H1 (cell line): ENCODE measurements at regions of chr3 and their contacts with region 1.

Region 1: DNA sequence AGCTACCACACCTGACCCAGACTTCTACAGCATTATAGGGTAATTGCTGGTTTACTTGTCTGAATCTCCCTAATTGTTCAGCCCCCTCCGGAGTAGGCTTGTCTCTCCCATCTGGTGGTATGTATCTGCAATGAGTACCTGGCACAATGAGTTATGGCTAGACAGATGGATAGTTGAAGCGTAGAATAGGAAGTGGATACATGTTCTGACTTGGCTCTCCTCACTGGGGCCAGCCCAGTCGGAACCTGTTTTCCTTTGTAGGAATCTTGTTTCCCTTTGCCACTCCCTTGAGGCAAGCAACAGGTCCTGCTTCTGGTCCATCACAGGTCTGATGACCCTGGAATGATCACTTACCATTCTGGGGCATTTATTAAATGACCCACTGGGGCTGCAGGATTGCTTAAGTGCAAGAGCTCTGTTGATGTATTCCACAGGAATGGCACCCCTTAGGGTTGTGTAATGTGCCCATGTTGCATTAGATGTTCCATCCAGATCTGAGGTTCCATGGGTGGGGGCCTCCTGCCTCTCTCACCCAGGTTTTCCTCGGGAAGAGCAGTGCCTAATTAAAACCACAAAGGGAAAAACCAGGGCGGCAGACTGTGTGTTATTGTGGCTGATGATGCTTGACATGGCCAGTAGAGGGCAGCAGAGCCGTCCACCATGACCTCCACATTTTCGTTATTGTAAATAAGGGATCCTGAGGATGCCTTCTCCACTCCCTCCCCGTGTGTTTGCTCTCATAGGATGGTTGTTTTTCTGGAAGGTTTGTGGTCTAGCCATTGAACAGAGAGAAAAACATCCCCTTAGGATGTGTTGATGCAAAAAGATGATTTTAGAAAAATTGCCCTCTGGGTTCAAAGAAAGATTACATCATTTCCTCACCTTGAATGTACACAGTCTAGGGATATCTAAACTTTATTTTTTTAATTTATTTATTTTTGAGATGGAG is 58.0 kb downstream of the CMTM8 start:
- DNase-seq: peak; percentile 44 to 73
- H3K4me3 ChIP-seq: no peak overlapping the region
- H3K27ac ChIP-seq: no peak overlapping the region
- H3K4me1 ChIP-seq: peaks cover 0 to 3% (median 0%) of the 10 kb centered on the region in 4 experiments; a peak in 2 of 7 replicates
- H3K27me3 ChIP-seq: no peaks in the 10 kb centered on the region
- CTCF ChIP-seq: peak; percentile 87 to 95 (median 88)
- EP300 ChIP-seq: no peak
- POLR2A ChIP-seq: no peak
- RAD21 ChIP-seq: peak; percentile 87 to 89

Region 2: DNA sequence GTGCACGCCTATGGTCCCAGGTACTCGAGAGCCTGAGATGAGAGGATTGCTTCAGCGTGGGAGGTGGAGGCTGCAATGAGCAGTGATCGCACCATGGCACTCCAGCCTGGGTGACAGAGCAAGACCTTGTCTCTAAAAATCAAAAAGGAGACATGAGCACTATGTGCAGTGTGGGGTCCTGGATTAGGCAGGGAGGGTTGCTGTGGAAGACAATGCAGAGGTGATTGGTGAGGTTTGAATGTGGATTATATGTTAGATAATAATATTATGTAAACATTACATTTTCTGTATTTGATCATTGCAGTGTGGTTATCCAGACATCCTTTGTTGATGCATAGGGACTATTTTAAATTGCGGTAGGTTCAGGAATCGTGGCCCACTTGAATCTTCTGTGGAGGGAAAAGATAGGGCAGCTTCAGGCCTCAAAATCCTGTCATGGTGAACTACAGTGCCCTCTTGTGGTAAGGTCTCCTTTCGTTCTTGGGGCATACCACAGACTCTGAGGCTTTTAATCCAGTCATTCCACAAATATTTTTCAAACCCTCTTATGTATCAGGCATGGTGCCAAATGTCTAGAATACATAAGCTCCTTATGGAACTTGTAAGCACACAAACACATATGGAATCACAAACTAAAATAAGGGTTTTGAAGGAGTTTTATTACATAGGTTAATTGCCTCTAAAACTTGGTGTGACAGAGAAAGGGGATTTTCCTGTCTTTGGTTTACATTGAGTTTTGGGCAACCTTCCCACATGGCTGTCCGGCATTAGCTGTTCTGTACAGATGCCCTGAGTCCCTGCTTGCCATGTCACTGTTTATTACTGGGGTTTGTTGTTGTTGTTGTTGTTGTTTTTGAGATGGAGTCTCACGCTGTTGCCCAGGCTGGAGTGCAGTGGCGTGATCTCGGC is 152.4 kb before region 1 on chr3:
- CTCF ChIA-PET with region 1: no interaction called
- POLR2A ChIA-PET with region 1: no interaction called
- DNase-seq: no peak
- H3K4me3 ChIP-seq: no peak overlapping the region
- H3K27ac ChIP-seq: no peak overlapping the region
- H3K4me1 ChIP-seq: peaks cover 0 to 6% (median 4%) of the 10 kb centered on the region in 4 experiments; a peak in 4 of 7 replicates
- H3K27me3 ChIP-seq: no peaks in the 10 kb centered on the region
- CTCF ChIP-seq: peak; percentile 26 to 81 (median 77)
- EP300 ChIP-seq: no peak
- POLR2A ChIP-seq: no peak
- RAD21 ChIP-seq: peak; percentile 89 to 91

Region 3: DNA sequence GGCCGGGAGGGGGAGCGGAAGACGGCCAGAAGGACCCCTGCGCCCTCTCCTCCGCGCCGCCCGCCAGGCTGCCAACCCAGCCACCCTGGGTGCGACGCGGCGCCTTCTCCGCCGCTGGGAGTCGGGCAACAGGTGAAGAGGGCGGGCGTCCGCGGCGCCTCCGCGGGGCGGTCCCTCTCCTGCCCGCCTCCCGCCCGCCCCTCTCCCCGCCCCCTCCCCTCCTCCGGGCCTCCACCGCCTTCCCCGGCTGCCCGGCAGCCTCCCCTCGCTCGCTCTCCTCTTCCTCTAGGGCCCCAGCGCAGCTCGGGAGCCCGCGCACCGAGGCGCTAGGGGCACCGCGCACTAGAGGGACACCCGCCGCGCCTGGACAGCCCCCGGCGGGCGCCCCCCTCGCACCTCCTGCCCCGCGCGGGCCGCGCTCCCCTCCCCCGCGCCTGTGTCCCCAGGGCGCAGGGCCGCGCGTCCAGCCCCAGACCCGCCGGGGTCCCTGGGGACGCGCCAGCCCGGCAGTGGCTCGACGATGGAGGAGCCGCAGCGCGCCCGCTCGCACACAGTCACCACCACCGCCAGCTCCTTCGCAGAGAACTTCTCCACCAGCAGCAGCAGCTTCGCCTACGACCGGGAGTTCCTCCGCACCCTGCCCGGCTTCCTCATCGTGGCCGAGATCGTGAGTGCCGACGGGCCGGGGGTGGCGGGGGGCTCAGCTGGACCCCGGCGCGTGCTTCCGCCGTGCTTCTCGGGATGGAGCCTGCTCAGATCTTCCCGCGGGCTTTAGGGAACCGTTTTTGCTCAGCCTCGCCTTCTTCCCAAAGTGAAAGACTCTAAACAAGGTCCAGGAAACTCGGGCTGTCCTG is 57.9 kb before region 1 on chr3 and contains the start of gene CMTM8:
- CTCF ChIA-PET with region 1: interaction called, 16 read pairs
- POLR2A ChIA-PET with region 1: no interaction called
- DNase-seq: peak in 1 of 2 experiments; percentile 77
- H3K4me3 ChIP-seq: peak within 1 kb of the TSS; percentile 54 to 72 (median 64)
- H3K27ac ChIP-seq: no peak within 1 kb of the TSS
- H3K4me1 ChIP-seq: peaks cover 0 to 8% (median 4%) of the 10 kb centered on the region in 4 experiments; a peak in 5 of 7 replicates
- H3K27me3 ChIP-seq: peaks cover 2 to 31% (median 19%) of the 10 kb centered on the region in 4 experiments
- CTCF ChIP-seq: no peak
- EP300 ChIP-seq: no peak
- POLR2A ChIP-seq: no peak
- RAD21 ChIP-seq: no peak
- total RNA-seq, gene CMTM8: 10.5 and 11.7 TPM in 2 replicates

Region 4: DNA sequence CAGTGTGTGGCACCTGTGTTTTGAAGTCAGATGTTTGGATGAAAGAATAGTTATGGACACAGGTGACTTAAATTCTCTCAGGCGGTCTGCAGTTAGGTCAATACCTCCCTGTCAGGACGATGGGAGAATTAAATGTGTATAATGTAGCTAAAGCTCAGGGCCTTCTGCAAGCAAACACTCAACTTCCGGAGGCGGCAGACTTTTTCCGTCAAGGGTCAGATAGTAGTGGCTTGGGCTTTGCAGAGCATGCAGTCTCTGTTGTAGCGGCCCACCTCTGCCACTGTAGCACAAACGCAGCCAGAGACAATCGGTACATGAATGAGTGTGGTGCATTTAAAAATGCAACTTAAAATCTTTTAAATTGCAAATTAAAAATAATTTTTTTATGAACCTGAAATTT is 10.6 kb before region 1 on chr3:
- CTCF ChIA-PET with region 1: interaction called, 43 read pairs
- POLR2A ChIA-PET with region 1: no interaction called
- DNase-seq: no peak
- H3K4me3 ChIP-seq: no peak overlapping the region
- H3K27ac ChIP-seq: no peak overlapping the region
- H3K4me1 ChIP-seq: 0 out of 7 replicates have a peak, but pooled peaks cover 0 to 2% (median 0%) of the 10 kb centered on the region in 4 experiments
- H3K27me3 ChIP-seq: no peaks in the 10 kb centered on the region
- CTCF ChIP-seq: no peak
- EP300 ChIP-seq: no peak
- POLR2A ChIP-seq: no peak
- RAD21 ChIP-seq: no peak

Region 5: GRCh38 chr3:32313723-32314473 is 17.4 kb after region 1 on chr3:
- CTCF ChIA-PET with region 1: interaction called, 13 read pairs
- POLR2A ChIA-PET with region 1: no interaction called
- DNase-seq: no peak
- H3K4me3 ChIP-seq: no peak overlapping the region
- H3K27ac ChIP-seq: no peak overlapping the region
- H3K4me1 ChIP-seq: peaks cover 0 to 14% (median 4%) of the 10 kb centered on the region in 4 experiments; a peak in 6 of 7 replicates
- H3K27me3 ChIP-seq: no peaks in the 10 kb centered on the region
- CTCF ChIP-seq: no peak
- EP300 ChIP-seq: no peak
- POLR2A ChIP-seq: no peak
- RAD21 ChIP-seq: no peak

Region 6: DNA sequence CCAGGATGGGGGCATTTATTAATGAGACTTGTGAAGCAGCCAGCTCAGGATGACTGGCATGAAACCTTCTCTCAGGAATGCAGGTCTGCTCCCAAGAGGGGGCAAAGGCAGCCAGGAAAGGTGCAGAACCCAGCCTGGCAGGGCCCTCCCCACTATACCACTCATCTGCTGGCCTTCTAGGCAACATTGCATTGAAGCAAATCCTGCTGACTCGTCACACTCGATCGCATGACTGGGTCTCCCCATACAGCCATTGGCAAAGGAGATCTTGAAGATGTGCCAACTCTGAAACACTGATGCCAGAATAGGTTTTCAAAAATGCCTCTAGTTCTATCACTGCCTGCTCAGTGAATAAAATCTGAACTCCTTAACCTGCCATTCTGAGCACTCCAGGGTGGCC is 29.4 kb after region 1 on chr3:
- CTCF ChIA-PET with region 1: interaction called, 207 read pairs
- POLR2A ChIA-PET with region 1: no interaction called
- DNase-seq: no peak
- H3K4me3 ChIP-seq: no peak overlapping the region
- H3K27ac ChIP-seq: no peak overlapping the region
- H3K4me1 ChIP-seq: peaks cover 7 to 21% (median 19%) of the 10 kb centered on the region in 4 experiments
- H3K27me3 ChIP-seq: no peaks in the 10 kb centered on the region
- CTCF ChIP-seq: no peak
- EP300 ChIP-seq: no peak
- POLR2A ChIP-seq: no peak
- RAD21 ChIP-seq: no peak

Region 7: GRCh38 chr3:32340039-32340438 is 43.5 kb after region 1 on chr3:
- CTCF ChIA-PET with region 1: interaction called, 207 read pairs
- POLR2A ChIA-PET with region 1: no interaction called
- DNase-seq: no peak
- H3K4me3 ChIP-seq: no peak overlapping the region
- H3K27ac ChIP-seq: no peak overlapping the region
- H3K4me1 ChIP-seq: no peaks in the 10 kb centered on the region; a peak in 1 of 7 replicates
- H3K27me3 ChIP-seq: no peaks in the 10 kb centered on the region
- CTCF ChIP-seq: peak; percentile 32 to 77 (median 68)
- EP300 ChIP-seq: no peak
- POLR2A ChIP-seq: no peak
- RAD21 ChIP-seq: peak; percentile 90 to 91